Endothelial cell of umbilical vein (primary cell): ENCODE measurements at regions of chr2 and their contacts with region 1.

Region 1: DNA sequence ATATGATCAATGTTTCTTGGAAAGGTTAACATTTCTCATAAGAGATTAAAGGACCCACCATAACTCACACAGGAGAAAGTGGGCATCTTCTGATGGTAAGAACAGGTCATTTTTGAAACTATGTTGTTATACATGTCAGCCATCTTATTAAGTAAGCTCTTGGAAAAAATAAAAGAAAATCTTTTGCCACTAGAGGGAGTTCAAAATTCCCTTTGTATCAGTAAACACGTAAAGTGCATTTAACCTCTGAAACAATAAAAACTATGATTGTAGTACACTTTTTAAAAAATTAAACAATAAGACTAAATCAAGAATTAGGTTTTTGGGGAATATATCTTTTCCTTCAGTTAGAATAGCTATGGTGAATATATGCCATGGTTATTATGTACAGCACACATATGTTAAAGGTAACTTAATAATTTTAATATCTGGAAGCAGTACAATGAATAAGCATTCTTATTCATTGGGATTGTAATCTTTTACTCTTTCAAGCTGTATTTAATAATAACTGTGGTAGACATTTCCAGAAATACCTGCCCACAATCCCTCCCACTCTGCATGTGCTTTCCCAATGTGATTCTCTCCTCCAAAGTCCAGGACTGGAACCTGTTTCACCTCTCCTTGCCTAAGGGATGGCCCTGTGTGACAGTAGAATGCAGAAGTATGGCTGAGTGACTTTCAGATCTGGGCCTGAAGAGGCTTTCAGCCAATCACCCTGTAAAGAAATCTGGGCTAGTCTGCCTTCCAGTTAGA is 64.2 kb downstream of the RBMS1 start:
- DNase-seq: peak; percentile 77
- H3K4me3 ChIP-seq: no peak overlapping the region
- H3K27ac ChIP-seq: peak overlapping the region; percentile 89
- H3K4me1 ChIP-seq: peaks cover 49% of the 10 kb centered on the region
- H3K27me3 ChIP-seq: no peaks in the 10 kb centered on the region
- CTCF ChIP-seq: peak; percentile 19 to 22
- POLR2A ChIP-seq: no peak

Region 2: DNA sequence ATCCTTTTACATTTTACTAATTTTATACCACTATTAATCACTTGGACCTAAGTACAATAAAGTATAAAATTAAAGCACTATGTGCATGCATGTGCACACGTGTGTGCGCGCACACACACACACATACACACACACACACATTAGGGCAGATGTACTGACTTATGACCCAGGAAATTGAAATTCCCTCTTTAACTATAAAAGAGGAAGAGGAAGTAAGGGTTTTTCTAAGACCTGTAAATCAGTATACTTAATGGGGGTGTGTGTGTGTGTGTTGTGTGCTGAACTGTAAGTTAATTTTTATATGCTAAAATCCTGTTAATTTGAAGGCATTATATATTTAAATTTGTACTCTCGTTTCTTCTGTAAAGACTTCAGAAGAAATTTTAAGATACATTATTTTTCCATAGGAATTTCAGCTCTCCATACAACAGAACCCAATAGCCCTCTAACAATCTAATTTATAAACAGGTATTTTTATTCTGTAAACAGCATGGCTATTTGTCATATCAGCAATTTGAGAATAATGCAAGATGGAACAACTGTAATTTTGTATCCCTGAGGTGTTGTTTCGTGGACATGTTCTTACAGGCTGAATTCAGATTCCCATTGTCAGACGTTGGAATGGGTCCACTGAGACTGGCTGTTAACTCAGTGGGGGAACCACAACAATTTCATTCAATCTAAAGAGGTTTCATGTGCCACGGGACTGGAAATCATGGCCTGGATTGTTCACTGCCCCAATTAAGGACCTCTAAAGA is 457.9 kb before region 1 on chr2:
- CTCF ChIA-PET with region 1: no interaction called
- POLR2A ChIA-PET with region 1: no interaction called
- dilution Hi-C with region 1: no loop called
- intact Hi-C with region 1: no loop called
- DNase-seq: no peak
- H3K4me3 ChIP-seq: no peak overlapping the region
- H3K27ac ChIP-seq: no peak overlapping the region
- H3K4me1 ChIP-seq: peaks cover 2% of the 10 kb centered on the region
- H3K27me3 ChIP-seq: no peaks in the 10 kb centered on the region
- CTCF ChIP-seq: no peak
- POLR2A ChIP-seq: no peak

Region 3: GRCh38 chr2:160109936-160110673 is 319.3 kb before region 1 on chr2:
- CTCF ChIA-PET with region 1: interaction called, 16 read pairs
- POLR2A ChIA-PET with region 1: no interaction called
- dilution Hi-C with region 1: no loop called
- intact Hi-C with region 1: no loop called
- DNase-seq: peak; percentile 83
- H3K4me3 ChIP-seq: no peak overlapping the region
- H3K27ac ChIP-seq: no peak overlapping the region
- H3K4me1 ChIP-seq: no peaks in the 10 kb centered on the region
- H3K27me3 ChIP-seq: no peaks in the 10 kb centered on the region
- CTCF ChIP-seq: peak; percentile 66 to 72
- POLR2A ChIP-seq: no peak

Region 4: DNA sequence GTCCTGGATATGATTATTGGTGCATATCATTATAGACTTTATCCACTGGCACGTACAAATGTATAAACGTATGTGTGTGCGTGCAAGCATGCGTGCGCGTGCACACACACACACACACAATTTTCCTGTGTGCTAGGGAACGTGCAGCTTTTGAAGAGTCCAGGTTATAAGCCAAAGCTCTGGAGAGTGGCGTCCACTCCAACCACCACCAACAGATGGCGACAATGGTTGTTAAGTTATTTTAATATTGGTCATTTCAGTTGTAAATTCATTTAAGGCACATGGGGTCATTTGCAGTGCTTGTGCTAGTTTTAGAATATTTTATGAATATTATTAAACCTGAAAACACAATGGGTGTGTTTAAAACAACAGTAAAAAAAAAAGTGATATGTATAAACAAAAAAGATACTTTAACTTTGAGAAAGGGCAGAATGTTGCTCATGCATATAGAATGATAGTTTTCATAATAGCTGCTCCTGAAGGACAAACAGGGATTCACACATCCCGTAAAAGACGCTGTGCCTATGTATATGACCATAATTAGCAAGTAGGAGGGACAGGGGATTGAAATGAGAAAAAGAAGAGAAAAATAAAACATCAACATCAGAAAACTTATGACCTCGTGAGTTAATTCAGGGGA is 105.1 kb before region 1 on chr2:
- CTCF ChIA-PET with region 1: interaction called, 31 read pairs
- POLR2A ChIA-PET with region 1: no interaction called
- dilution Hi-C with region 1: no loop called
- intact Hi-C with region 1: no loop called
- DNase-seq: peak; percentile 74
- H3K4me3 ChIP-seq: no peak overlapping the region
- H3K27ac ChIP-seq: no peak overlapping the region
- H3K4me1 ChIP-seq: no peaks in the 10 kb centered on the region
- H3K27me3 ChIP-seq: no peaks in the 10 kb centered on the region
- CTCF ChIP-seq: peak; percentile 63
- POLR2A ChIP-seq: no peak

Region 5: DNA sequence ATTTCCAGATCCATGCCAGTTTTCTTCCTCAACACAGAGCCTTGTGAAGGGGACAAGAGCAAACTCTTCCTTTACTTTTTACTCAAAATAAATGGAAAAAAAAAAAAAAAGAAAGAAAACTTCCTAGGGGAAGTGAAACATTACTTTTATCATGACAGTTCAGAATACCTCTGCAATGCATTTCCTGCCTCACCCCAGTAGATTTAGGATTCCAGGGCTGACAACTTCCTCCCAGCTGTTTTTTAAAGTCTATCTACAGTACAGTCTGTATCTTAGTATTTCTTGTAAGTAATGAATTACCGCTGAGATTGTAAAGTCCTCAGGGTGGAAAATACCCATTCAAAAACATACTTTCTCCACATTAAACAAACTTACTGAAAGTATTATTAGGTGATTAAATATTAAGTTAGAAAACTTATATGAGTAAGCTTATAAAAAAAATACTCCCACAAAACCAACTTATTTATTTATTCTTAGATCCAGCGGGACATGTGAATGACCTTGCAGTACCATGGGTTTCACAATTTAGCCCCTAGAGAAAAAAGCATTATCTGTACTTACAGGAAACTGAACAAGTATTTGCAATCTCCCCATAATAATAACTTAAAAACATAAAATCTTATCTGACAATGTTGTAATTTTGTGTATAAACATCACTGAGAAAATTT is 53.5 kb before region 1 on chr2:
- CTCF ChIA-PET with region 1: interaction called, 24 read pairs
- POLR2A ChIA-PET with region 1: no interaction called
- dilution Hi-C with region 1: no loop called
- intact Hi-C with region 1: loop called (anchors 2 kb)
- DNase-seq: peak; percentile 66
- H3K4me3 ChIP-seq: peak overlapping the region in 1 of 3 experiments; percentile 22
- H3K27ac ChIP-seq: peak overlapping the region; percentile 85
- H3K4me1 ChIP-seq: peaks cover 97% of the 10 kb centered on the region
- H3K27me3 ChIP-seq: no peaks in the 10 kb centered on the region
- CTCF ChIP-seq: no peak
- POLR2A ChIP-seq: peak; percentile 58

Region 6: DNA sequence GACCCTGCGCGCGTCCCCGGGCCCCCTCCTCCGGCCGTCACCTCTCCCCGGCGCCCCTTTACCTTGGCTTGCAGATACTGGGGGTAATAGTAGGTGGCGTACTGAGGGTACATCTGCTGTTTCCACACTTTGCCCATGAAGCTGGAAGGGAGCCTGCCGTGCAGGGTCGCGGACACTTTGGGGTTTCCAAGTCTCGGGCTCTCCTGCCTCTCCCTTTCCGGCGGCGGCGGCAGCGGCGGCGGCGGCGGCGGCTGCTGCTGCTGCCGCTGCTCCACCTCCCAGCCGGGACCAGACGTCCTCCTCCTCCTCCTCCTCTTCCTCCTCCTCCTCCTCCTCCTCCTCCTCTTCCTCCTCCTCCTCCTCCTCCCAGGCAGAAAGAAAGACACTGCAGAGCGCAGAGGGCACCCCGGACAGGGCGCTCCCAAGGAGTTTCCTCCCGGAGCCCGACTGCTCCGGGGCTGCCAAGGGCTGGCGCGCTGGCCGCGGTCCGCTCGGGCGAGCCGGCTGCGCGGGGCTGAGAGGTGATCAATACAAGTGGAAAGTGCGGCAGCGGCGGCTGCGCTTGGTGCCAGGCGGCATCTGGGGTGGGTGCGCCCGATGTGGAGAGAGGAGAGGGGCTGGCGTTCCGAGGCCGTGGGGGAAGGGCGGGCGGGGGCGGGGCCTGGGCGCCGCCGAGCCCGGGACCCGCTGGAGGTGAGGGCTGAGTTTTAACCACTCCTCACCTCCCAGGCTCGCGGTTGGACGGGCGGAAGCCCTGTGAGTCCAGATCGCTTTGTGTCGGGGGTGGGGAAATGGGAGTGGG is 64.0 kb after region 1 on chr2 and contains the start of gene RBMS1:
- CTCF ChIA-PET with region 1: interaction called, 11 read pairs
- POLR2A ChIA-PET with region 1: no interaction called
- dilution Hi-C with region 1: no loop called
- intact Hi-C with region 1: loop called (anchors 2 kb)
- DNase-seq: no peak
- H3K4me3 ChIP-seq: peak within 1 kb of the TSS; percentile 98 to 100 (median 99)
- H3K27ac ChIP-seq: peak within 1 kb of the TSS; percentile 89
- H3K4me1 ChIP-seq: peaks cover 25% of the 10 kb centered on the region
- H3K27me3 ChIP-seq: no peaks in the 10 kb centered on the region
- CTCF ChIP-seq: no peak
- POLR2A ChIP-seq: no peak
- total RNA-seq, gene RBMS1: 93.3 and 94.8 TPM in 2 replicates

Region 7: GRCh38 chr2:160963957-160964356 is 534.5 kb after region 1 on chr2:
- CTCF ChIA-PET with region 1: interaction called, 49 read pairs
- POLR2A ChIA-PET with region 1: no interaction called
- dilution Hi-C with region 1: no loop called
- intact Hi-C with region 1: no loop called
- DNase-seq: no peak
- H3K4me3 ChIP-seq: no peak overlapping the region
- H3K27ac ChIP-seq: no peak overlapping the region
- H3K4me1 ChIP-seq: no peaks in the 10 kb centered on the region
- H3K27me3 ChIP-seq: no peaks in the 10 kb centered on the region
- CTCF ChIP-seq: no peak
- POLR2A ChIP-seq: no peak